Naive thymus-derived CD4-positive, alpha-beta T cell (primary cell): ENCODE measurements at regions of chr3 and their contacts with region 1.

Region 1: DNA sequence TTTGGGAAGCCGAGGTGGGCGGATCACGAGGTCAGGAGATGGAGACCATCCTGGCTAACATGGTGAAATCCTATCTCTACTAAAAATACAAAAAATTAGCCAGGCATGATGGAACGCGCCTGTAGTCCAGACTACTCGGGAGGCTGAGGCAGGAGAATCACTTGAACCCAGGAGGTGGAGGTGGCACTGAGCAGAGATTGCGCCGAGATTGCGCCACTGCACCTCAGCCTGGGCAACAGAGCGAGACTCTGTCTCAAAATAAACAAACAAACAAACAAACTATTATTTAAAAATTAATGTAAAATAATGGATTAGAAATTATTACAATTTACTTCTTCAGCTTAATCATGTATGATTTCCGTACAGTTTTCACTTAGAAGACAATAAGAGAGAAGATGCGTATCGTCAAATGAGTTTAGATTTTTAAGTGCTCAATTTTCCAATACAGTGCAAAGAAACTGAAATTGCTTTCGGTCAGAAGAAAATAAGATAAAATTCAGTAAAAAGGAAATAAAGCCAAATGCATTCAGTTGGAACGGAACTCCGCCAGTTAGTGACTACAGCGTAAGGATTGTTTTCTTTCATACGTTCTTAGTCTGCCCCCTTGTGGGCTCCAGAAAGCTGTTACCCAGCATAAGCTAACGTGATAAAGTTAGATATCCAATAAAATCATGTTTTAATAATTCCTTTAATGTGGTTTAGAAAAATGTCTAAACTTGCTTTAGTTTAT is 24.8 kb downstream of the AADAC start:
- DNase-seq: peak in 6 of 9 donors; percentile 6 to 40 (median 26)
- ATAC-seq: peak; percentile 70
- H3K4me3 ChIP-seq: no peak overlapping the region
- H3K4me3 Mint-ChIP-seq: no peak overlapping the region
- H3K27ac ChIP-seq: no peak overlapping the region
- H3K27ac Mint-ChIP-seq: no peak overlapping the region
- H3K4me1 ChIP-seq: no peaks in the 10 kb centered on the region
- H3K4me1 Mint-ChIP-seq: peaks cover 0 to 3% (median 0%) of the 10 kb centered on the region in 7 donors
- H3K27me3 ChIP-seq: no peaks in the 10 kb centered on the region
- H3K27me3 Mint-ChIP-seq: peaks cover 6 to 42% (median 11%) of the 10 kb centered on the region in 5 donors

Region 2: DNA sequence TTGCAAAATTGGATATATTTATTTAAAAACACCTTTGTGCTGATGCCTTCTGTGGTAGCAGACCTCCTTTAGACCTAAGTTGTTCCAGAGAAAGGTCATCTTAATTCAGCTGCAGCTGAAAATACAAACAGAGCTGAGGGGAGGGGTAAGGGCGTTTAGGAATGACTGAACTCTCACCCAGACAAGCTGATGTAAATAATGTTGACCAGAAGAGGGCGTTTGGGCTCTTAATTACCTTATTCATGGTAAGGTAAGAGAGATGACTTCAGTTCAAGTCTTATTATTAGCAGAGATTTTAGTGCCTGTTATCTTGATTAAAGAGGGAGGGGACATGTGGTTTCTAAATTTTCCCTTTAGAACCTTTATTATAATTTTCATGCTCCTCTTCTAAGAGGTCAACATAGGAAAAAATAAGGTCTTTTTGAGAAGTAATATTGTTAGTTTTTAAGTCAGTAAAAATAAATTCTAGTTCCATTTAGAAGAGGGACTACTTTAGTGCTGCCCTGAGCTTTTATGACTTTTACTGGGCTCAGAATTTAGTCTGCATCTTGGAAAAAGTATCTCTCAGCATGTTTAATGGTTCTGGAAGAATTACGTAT is 682.0 kb before region 1 on chr3:
- CTCF ChIA-PET with region 1: interaction called, 4 read pairs
- POLR2A ChIA-PET with region 1: no interaction called
- intact Hi-C with region 1: loop called (anchors 2 kb)
- DNase-seq: peak in 7 of 9 donors; percentile 27 to 53 (median 44)
- ATAC-seq: peak; percentile 82
- H3K4me3 ChIP-seq: no peak overlapping the region
- H3K4me3 Mint-ChIP-seq: no peak overlapping the region
- H3K27ac ChIP-seq: no peak overlapping the region
- H3K27ac Mint-ChIP-seq: no peak overlapping the region
- H3K4me1 ChIP-seq: no peaks in the 10 kb centered on the region
- H3K4me1 Mint-ChIP-seq: no peaks in the 10 kb centered on the region
- H3K27me3 ChIP-seq: no peaks in the 10 kb centered on the region
- H3K27me3 Mint-ChIP-seq: peaks cover 0 to 13% (median 0%) of the 10 kb centered on the region in 5 donors

Region 3: DNA sequence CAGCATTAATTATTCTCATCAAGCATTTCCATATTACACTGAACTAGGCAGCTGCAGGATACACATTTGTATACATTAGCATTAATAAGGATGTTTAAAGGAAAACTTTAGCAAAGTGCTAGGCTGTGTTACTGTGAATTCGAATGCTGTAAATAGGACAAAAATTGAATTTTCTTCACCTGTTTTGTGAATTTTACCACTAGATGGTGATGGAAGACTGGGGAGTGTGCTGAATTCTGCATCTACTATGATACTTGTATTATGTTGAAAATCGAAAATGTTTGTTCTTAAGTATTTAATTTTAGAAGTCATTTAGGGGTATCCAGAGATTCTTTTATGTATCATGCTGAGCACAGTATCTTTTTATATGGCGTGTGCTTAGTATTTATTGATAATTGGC is 548.1 kb before region 1 on chr3:
- CTCF ChIA-PET with region 1: no interaction called
- POLR2A ChIA-PET with region 1: no interaction called
- intact Hi-C with region 1: loop called in 1 of 2 experiments (anchors 2 kb)
- DNase-seq: no peak
- ATAC-seq: no peak
- H3K4me3 ChIP-seq: no peak overlapping the region
- H3K4me3 Mint-ChIP-seq: no peak overlapping the region
- H3K27ac ChIP-seq: no peak overlapping the region
- H3K27ac Mint-ChIP-seq: no peak overlapping the region
- H3K4me1 ChIP-seq: no peaks in the 10 kb centered on the region
- H3K4me1 Mint-ChIP-seq: peaks cover 0 to 6% (median 0%) of the 10 kb centered on the region in 7 donors
- H3K27me3 ChIP-seq: no peaks in the 10 kb centered on the region
- H3K27me3 Mint-ChIP-seq: peaks cover 0 to 20% (median 0%) of the 10 kb centered on the region in 5 donors

Region 4: GRCh38 chr3:151439652-151440129 is 399.1 kb before region 1 on chr3:
- CTCF ChIA-PET with region 1: no interaction called
- POLR2A ChIA-PET with region 1: no interaction called
- intact Hi-C with region 1: loop called in 1 of 2 experiments (anchors 1 kb)
- DNase-seq: peak in 6 of 9 donors; percentile 18 to 33 (median 24)
- ATAC-seq: peak; percentile 65
- H3K4me3 ChIP-seq: no peak overlapping the region
- H3K4me3 Mint-ChIP-seq: no peak overlapping the region
- H3K27ac ChIP-seq: no peak overlapping the region
- H3K27ac Mint-ChIP-seq: no peak overlapping the region
- H3K4me1 ChIP-seq: no peaks in the 10 kb centered on the region
- H3K4me1 Mint-ChIP-seq: no peaks in the 10 kb centered on the region
- H3K27me3 ChIP-seq: no peaks in the 10 kb centered on the region
- H3K27me3 Mint-ChIP-seq: peaks cover 0 to 9% (median 0%) of the 10 kb centered on the region in 5 donors

Region 5: DNA sequence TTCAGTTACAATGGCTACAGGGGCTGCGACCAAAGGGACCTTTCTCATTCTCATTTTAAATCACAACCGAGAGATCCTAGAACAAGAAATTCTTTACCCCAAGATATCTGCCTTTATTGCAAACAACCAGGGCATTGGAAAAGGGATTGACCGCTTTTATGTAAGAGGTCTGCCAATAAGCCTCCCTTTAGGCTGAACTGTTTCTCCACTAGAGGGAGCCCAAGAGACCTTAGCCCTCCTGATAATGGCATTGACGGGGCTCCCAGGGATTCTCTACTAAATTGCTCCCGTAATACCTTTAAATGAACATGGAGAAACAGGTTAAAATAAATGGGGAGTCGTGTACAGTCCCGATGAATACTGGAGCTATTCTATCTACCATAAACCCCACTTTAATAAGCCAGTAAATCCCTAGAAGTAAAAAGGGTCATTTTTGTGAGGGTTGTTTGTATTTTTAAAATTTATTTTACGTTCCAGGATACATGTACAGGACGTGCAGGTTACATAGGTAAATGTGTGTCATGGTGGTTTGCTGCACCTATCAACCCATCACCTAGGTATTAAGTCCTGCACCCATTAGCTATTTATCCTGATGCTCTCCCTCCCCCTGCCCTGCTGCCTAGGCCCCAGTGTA is 370.3 kb before region 1 on chr3:
- CTCF ChIA-PET with region 1: interaction called, 4 read pairs
- POLR2A ChIA-PET with region 1: no interaction called
- intact Hi-C with region 1: loop called in 1 of 2 experiments (anchors 1 kb)
- DNase-seq: peak in 7 of 9 donors; percentile 14 to 64 (median 31)
- ATAC-seq: peak; percentile 67
- H3K4me3 ChIP-seq: no peak overlapping the region
- H3K4me3 Mint-ChIP-seq: no peak overlapping the region
- H3K27ac ChIP-seq: no peak overlapping the region
- H3K27ac Mint-ChIP-seq: no peak overlapping the region
- H3K4me1 ChIP-seq: no peaks in the 10 kb centered on the region
- H3K4me1 Mint-ChIP-seq: no peaks in the 10 kb centered on the region
- H3K27me3 ChIP-seq: no peaks in the 10 kb centered on the region
- H3K27me3 Mint-ChIP-seq: peaks cover 10 to 22% (median 12%) of the 10 kb centered on the region in 5 donors

Region 6: DNA sequence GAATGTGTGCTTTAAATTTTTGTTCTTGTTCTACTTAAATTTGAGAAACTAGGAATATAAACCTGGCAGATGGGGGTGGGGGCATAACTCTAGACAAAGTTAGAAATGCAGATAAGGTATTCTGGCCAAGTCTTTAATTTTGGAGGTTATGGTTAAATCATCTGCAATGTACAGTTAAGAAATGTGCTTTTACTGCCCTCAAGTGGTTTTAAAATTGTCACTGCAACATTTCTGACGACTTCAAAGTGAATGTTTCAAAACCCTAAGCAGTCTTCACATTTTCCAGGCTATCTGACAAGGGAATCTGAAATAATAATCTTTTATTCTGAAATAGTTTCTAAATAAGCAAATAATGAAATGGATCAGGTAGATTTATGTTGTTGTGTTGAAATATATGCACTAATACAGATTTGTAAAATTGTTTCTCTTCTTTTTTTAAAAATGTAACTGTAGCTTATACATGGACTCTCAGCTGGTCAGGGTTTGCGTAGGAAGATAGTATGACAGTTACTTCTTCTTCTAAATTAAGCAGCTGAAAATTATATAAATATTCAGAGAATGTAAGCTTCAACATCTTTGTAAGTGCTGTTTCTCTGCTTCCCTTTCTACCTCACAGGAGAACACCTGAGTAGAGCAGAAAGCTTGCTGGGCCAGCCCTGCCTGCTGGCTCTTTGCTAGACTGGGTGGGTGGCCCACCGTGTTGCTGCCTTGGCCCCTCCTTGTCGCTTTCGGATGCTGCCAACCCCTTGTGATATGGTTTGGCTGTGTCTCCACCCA is 79.7 kb after region 1 on chr3:
- CTCF ChIA-PET with region 1: no interaction called
- POLR2A ChIA-PET with region 1: no interaction called
- intact Hi-C with region 1: loop called in 1 of 2 experiments (anchors 5 kb)
- DNase-seq: peak in 5 of 9 donors; percentile 11 to 40 (median 21)
- ATAC-seq: peak; percentile 57
- H3K4me3 ChIP-seq: no peak overlapping the region
- H3K4me3 Mint-ChIP-seq: no peak overlapping the region
- H3K27ac ChIP-seq: no peak overlapping the region
- H3K27ac Mint-ChIP-seq: no peak overlapping the region
- H3K4me1 ChIP-seq: no peaks in the 10 kb centered on the region
- H3K4me1 Mint-ChIP-seq: no peaks in the 10 kb centered on the region
- H3K27me3 ChIP-seq: no peaks in the 10 kb centered on the region
- H3K27me3 Mint-ChIP-seq: peaks cover 0 to 7% (median 0%) of the 10 kb centered on the region in 5 donors